GM10248 (cell line): ENCODE measurements at regions of chr15 and their contacts with region 1.

Region 1: DNA sequence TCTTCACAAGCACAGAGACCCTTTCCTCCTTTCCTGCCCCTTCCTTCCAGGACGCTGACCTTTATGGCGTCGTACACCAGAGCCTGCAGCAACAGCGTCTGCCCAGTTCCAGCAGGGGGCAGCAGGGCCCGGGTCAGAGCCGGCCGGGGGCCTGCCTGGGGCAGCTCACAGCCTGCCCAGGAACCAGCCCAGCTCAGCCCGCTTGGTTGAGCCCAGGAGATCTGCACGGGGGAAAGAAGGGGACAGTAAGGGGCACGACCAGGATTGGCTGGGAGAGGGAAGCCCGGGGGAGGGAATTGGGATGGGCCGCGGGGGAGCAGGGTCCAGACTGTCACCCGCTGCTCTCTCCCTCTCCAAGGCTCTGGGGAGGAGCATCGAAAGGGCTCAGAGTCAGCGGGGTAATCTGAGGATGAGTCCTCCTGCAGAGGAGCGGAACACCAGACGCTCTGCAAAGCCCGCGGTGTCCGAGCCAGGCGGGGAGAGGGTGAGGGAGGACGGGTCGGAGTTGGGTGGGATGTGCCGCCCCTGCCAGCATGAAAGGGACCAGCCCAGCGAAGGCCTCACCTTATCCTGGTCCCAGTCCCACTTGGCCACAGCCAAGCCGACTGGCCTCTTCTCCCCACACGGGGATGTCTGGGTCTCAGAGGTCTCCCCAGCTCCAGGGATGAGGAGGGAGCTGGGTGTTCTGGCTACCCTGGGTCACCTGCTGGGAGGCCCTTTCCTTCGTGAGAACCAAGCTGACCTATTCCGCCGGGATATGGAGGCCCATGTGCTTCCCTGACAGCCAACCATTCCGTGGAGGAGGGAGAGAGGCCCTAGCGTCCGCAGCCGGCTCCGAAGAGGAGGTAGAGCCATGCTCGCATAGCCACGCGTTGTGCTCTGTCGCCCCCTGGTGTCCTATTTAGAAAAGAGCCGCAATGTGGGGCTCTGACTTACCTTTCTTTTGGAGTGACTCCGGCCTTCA is 7.4 kb upstream of the IGDCC3 start:
- DNase-seq: peak; percentile 94
- CTCF ChIP-seq: peak; percentile 94

Region 2: GRCh38 chr15:65318870-65319356 is 66.3 kb before region 1 on chr15:
- CTCF ChIA-PET with region 1: interaction called, 203 read pairs
- POLR2A ChIA-PET with region 1: no interaction called
- DNase-seq: peak; percentile 89
- CTCF ChIP-seq: peak; percentile 86

Region 3: DNA sequence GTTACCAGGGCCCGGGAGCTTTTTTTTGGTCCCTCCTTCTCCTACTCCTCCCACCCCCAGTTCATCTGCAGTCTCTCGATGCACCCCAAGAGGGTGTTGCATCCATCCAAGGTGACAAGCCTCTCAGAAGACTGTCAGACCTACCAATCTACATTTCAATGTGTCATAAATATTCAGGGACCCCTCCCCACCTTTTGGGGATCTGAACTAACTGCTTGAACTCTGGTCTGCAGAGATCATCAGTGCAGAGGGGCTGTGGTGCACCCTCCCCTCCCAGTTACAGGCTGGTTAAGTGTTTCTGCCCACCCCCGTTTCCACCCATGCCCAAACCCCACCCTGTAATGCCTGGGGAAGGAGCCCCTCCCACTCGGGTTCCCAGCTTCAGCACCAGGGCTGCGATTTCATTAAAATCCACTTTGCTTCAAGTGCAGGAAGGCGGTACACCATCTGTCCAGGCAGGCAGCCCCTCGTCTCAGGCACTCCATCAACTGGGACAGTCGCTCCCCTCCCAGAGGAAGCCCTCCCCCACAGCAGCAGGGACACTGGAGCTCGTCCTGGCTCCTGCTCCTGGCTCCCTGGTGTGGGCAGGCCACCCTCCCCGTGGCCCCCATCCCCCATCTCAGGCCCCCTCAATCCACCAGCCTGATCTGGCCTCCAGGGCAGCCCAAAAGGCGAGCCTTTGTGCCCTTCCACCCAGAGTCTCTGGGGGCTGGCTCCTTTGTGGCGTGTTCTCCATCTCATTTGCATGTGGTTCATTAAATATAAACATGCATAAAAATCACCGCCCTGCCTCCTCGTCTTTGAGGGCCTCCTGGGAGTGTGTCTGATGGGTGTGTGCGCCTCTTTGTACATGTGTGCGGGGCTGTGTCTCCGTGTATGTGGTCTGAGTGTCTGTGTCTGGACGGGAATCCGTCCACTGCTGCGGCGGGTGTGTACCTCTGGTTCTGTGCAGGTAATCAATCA is 48.4 kb before region 1 on chr15:
- CTCF ChIA-PET with region 1: interaction called, 11 read pairs
- POLR2A ChIA-PET with region 1: no interaction called
- DNase-seq: no peak
- CTCF ChIP-seq: no peak

Region 4: GRCh38 chr15:65374821-65375401 is 10.3 kb before region 1 on chr15:
- CTCF ChIA-PET with region 1: interaction called, 55 read pairs
- POLR2A ChIA-PET with region 1: no interaction called
- DNase-seq: no peak
- CTCF ChIP-seq: no peak

Region 5: GRCh38 chr15:65400760-65401610 is 15.8 kb after region 1 on chr15:
- CTCF ChIA-PET with region 1: interaction called, 96 read pairs
- POLR2A ChIA-PET with region 1: no interaction called
- DNase-seq: peak; percentile 85
- CTCF ChIP-seq: peak; percentile 91

Region 6: GRCh38 chr15:65421360-65422070 is 36.3 kb after region 1 on chr15:
- CTCF ChIA-PET with region 1: interaction called, 20 read pairs
- POLR2A ChIA-PET with region 1: no interaction called
- DNase-seq: peak; percentile 76
- CTCF ChIP-seq: no peak